ENCODE measurements at regions of chr14 and their contacts with region 1.

Region 1: GRCh38 chr14:104800015-104800770 is 708 bp upstream of the ZBTB42 start:
- DNase-seq: peak; percentile 68 to 74
- ATAC-seq: peak; percentile 63 to 66
- H3K4me3 ChIP-seq: peak overlapping the region; percentile 45 to 77 (median 58)
- H3K27ac ChIP-seq: peak overlapping the region; percentile 84 to 91 (median 89)
- H3K4me1 ChIP-seq: peaks cover 19 to 32% of the 10 kb centered on the region in 2 donors
- H3K27me3 ChIP-seq: no peaks in the 10 kb centered on the region
- CTCF ChIP-seq: peak in 4 of 5 experiments; percentile 28 to 53 (median 36)
- POLR2A ChIP-seq: peak in 1 of 2 donors; percentile 54

Region 2: DNA sequence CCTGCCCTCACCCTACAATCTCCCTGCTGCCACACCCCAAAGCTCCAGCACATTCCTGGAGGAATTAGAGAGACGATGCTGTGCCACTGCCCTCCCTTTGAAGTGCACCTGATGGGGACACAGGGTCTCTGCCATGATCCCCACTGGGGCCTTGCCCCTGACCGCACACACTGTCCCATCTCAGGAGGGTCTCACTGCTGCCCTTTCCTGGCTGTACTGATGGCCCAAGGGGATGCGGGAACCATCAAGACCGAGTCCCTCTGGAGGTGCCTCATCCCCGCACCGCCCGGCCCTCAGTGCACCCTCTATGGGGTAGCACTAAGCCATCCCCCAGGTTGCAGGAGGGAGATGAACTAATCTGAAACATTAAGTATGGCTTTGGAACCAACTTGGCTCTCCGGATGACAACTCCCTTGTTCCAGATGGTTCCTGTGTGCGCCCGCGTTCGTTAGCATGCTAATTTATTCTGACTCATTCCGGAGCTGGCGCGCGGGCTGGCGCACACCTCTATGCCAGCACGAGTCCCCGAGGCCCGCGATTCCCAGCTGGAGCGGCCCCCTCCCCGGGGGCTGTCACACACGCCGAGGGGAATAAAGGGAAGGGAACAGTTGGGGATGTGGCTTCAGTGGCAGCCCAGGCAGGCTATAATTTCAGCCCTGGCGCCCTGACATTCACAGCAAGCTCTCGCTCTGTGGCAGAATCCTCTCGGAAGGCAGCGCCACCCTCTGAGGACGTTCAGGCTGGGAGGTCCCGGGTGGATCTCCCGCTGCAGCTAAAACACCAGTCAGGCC is 254.8 kb before region 1 on chr14:
- in situ Hi-C with region 1: no loop called
- intact Hi-C with region 1: no loop called
- DNase-seq: no peak
- ATAC-seq: no peak
- H3K4me3 ChIP-seq: no peak overlapping the region
- H3K27ac ChIP-seq: no peak overlapping the region
- H3K4me1 ChIP-seq: no peaks in the 10 kb centered on the region
- H3K27me3 ChIP-seq: peaks cover 26 to 39% (median 27%) of the 10 kb centered on the region in 3 donors
- CTCF ChIP-seq: no peak
- POLR2A ChIP-seq: no peak

Region 3: GRCh38 chr14:104826189-104826860 is 26.1 kb after region 1 on chr14:
- in situ Hi-C with region 1: no loop called
- intact Hi-C with region 1: loop called (anchors 1 kb)
- DNase-seq: peak; percentile 71 to 81
- ATAC-seq: peak; percentile 94 to 95
- H3K4me3 ChIP-seq: peak overlapping the region; percentile 56 to 76 (median 62)
- H3K27ac ChIP-seq: peak overlapping the region in 1 of 4 donors; percentile 26
- H3K4me1 ChIP-seq: peaks cover 0 to 18% of the 10 kb centered on the region in 2 donors
- H3K27me3 ChIP-seq: peaks cover 0 to 4% (median 3%) of the 10 kb centered on the region in 3 donors
- CTCF ChIP-seq: peak; percentile 46 to 95 (median 87)
- POLR2A ChIP-seq: no peak

Region 4: DNA sequence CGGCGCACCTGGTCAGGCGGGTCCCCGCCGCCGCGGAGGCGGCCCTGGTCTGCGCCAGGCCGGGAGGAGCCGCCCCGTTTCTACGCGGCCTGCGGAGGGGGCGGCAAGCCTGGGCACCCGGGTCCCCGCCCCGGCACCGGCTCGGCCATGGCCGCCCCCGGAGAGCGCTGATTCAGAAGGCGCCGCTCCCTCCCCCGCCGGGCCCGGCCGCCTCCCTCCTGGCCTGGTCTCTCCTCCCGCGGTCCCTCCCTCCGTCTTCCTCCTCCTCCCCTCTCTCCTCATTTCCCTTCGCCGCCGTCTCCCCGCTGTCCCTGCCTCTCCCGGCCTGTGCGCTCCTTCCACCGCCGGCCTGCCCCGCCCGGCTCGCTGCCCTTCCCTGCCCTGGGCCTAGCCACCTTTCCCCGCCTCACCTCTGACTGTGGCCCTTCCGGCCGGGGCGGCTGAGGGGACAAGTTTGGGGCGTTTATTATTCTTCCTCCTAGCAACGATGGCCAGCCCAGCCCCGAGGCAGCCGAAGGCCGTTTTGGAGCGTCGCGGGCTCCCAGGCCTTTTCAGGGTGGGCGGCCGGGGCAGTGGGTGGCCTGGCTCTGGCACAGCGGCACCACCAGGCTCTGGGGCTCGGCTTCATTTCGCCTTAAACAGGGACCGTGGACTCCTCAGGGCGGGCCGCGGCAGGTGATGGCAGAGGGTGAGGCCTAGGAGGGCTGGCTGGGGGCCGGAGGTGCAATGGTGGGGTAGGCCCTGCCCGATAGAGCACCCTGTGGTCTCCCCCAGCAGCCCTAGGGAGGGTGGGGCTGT is 65.7 kb after region 1 on chr14:
- in situ Hi-C with region 1: no loop called
- intact Hi-C with region 1: loop called (anchors 5 kb)
- DNase-seq: no peak
- ATAC-seq: peak; percentile 61 to 77
- H3K4me3 ChIP-seq: peak overlapping the region; percentile 65 to 76 (median 73)
- H3K27ac ChIP-seq: peak overlapping the region; percentile 20 to 63 (median 50)
- H3K4me1 ChIP-seq: peaks cover 14 to 17% of the 10 kb centered on the region in 2 donors
- H3K27me3 ChIP-seq: peaks cover 13 to 16% (median 14%) of the 10 kb centered on the region in 3 donors
- CTCF ChIP-seq: no peak
- POLR2A ChIP-seq: peak in 1 of 2 donors; percentile 30

Region 5: GRCh38 chr14:105012171-105012985 is 212.2 kb after region 1 on chr14:
- in situ Hi-C with region 1: no loop called
- intact Hi-C with region 1: no loop called
- DNase-seq: no peak
- ATAC-seq: no peak
- H3K4me3 ChIP-seq: no peak overlapping the region
- H3K27ac ChIP-seq: no peak overlapping the region
- H3K4me1 ChIP-seq: no peaks in the 10 kb centered on the region
- H3K27me3 ChIP-seq: no peaks in the 10 kb centered on the region
- CTCF ChIP-seq: peak in 2 of 5 experiments; percentile 23 to 44
- POLR2A ChIP-seq: no peak